Mammary epithelial cell (primary cell): ENCODE measurements at regions of chr1 and their contacts with region 1.

Region 1: GRCh38 chr1:64966158-64966971 is at the start of gene JAK1:
- DNase-seq: peak; percentile 71
- H3K4me3 ChIP-seq: peak within 1 kb of the TSS; percentile 79 to 89 (median 87)
- H3K27ac ChIP-seq: peak within 1 kb of the TSS; percentile 87
- H3K4me1 ChIP-seq: peaks cover 25% of the 10 kb centered on the region
- H3K27me3 ChIP-seq: no peaks in the 10 kb centered on the region
- CTCF ChIP-seq: no peak
- total RNA-seq, gene JAK1: 74.9 to 125 TPM

Region 2: DNA sequence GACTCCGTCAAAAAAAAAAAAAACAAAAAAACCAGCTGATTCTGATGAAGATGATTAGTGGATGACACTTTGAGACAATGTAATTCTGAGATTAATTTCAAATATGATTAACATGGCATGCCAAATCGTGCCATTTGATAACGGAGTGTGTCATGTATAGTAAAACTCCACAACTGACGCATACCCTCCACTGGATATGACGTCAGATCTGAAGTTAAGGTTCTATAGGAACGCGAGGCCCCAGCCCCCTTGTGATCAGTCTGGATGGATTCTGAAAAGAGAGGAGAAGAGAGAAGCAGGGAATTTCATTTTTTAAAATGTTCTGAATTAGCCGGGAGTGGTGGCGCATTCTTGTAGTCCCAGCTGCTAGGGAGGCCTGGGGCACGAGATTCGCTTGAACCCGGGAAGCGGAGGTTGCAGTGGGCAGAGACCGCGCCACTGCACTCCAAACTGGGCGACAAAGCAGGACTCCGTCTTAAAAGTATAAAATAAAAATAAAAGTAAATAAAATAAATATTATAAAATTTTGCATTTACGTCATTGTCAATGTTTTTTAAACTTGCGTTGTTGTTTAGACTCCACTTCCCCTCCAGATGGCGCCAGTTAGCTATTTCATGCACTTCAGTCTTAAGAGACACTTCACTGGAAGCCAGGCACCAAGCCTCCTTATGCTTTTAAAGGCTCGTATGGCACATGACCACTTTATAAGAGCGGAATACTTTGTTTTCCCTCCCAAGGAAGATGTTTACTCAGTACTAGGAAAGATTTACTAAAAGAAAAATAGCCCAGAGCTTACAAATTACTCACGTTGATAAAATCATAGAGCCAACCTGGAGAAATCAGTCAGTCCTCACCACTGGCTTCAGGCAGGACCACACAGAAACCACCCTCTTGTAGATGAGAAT is 697.5 kb before region 1 on chr1:
- CTCF ChIA-PET with region 1: no interaction called
- dilution Hi-C with region 1: no loop called
- in situ Hi-C with region 1: no loop called
- intact Hi-C with region 1: loop called (anchors 10 kb)
- DNase-seq: peak; percentile 57
- H3K4me3 ChIP-seq: peak overlapping the region in 1 of 3 experiments; percentile 34
- H3K27ac ChIP-seq: no peak overlapping the region
- H3K4me1 ChIP-seq: peaks cover 5% of the 10 kb centered on the region
- H3K27me3 ChIP-seq: no peaks in the 10 kb centered on the region
- CTCF ChIP-seq: peak; percentile 55 to 77

Region 3: DNA sequence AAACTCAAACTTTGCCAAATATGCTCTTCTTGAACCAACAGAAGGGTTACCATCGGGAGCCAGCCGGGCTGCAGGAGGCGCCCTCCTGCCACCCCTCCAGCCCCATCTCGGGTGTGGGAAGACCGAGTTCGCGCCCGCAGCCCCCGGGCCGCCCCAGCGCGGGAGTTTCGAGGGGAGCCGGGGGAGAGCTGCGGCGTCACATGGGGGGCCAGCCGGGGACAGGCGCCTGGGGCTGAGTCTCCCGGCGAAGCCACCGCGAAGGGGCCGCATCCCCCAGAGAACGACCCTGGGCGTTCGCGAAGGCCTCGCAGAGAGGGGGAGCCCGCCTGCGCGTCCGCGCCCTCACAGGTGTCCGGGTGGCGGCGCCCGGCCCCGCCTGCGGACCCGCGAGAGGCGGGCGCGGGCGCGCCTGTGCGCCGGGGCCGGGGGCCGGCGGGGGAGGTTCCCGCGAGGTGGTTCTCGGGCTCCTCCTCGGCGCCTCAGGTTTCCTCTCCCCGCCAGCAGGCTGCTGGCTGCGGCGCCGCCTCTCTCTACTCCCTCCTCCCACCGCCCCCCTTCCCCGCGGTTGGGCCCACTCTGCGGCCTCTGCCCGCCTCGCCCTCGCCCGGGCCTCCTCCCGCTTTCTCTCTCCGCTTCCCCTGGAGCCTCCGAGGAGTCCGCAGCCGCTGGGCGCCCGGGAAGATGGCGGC is 221.7 kb before region 1 on chr1 and contains the start of gene RAVER2:
- CTCF ChIA-PET with region 1: no interaction called
- dilution Hi-C with region 1: no loop called
- in situ Hi-C with region 1: no loop called
- intact Hi-C with region 1: loop called (anchors 1 kb)
- DNase-seq: peak; percentile 71
- H3K4me3 ChIP-seq: peak within 1 kb of the TSS; percentile 79 to 87 (median 80)
- H3K27ac ChIP-seq: peak within 1 kb of the TSS; percentile 35
- H3K4me1 ChIP-seq: peaks cover 5% of the 10 kb centered on the region
- H3K27me3 ChIP-seq: no peaks in the 10 kb centered on the region
- CTCF ChIP-seq: peak; percentile 17 to 70
- total RNA-seq, gene RAVER2: 9.7 to 15.8 TPM

Region 4: DNA sequence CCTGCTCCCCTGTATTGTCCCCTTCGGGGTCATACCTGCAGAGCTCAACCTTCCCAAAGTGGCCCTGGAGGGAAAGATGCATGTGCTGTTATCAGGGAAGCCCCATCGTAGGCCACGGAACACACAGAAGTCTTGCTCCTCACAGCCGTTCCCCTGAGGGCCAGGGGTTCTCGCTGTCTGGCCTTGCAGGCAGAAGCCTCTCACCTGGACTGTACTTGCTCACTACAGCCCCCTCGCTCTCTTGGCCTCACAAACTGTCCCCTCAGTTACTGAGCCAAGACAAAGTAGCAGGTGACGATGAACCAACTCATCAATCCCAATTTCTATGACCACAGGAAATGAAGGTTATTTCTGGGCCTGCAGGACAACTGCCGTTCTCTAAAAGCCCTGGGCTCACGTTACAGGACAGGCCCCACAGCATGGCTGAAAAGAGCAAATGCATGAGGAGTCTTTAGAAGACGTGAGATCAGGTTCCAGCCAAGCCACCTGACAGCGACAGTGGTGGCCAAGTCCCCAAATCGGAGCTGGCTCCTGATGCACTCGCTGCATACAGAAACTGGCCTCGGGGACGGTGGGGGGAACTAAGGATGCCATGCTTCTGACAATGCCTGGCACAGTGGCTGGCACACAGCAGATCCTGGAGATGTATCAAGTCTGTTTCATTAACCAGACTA is 126.5 kb before region 1 on chr1:
- CTCF ChIA-PET with region 1: no interaction called
- dilution Hi-C with region 1: no loop called
- in situ Hi-C with region 1: no loop called
- intact Hi-C with region 1: loop called (anchors 5 kb)
- DNase-seq: no peak
- H3K4me3 ChIP-seq: no peak overlapping the region
- H3K27ac ChIP-seq: no peak overlapping the region
- H3K4me1 ChIP-seq: peaks cover 3% of the 10 kb centered on the region
- H3K27me3 ChIP-seq: no peaks in the 10 kb centered on the region
- CTCF ChIP-seq: no peak

Region 5: GRCh38 chr1:64882574-64883255 is 83.7 kb before region 1 on chr1:
- CTCF ChIA-PET with region 1: no interaction called
- dilution Hi-C with region 1: no loop called
- in situ Hi-C with region 1: no loop called
- intact Hi-C with region 1: loop called (anchors 5 kb)
- DNase-seq: no peak
- H3K4me3 ChIP-seq: no peak overlapping the region
- H3K27ac ChIP-seq: no peak overlapping the region
- H3K4me1 ChIP-seq: peaks cover 5% of the 10 kb centered on the region
- H3K27me3 ChIP-seq: no peaks in the 10 kb centered on the region
- CTCF ChIP-seq: no peak

Region 6: GRCh38 chr1:64917328-64917861 is 49.0 kb before region 1 on chr1:
- CTCF ChIA-PET with region 1: no interaction called
- dilution Hi-C with region 1: no loop called
- in situ Hi-C with region 1: no loop called
- intact Hi-C with region 1: loop called (anchors 5 kb)
- DNase-seq: peak; percentile 78
- H3K4me3 ChIP-seq: no peak overlapping the region
- H3K27ac ChIP-seq: peak overlapping the region; percentile 45
- H3K4me1 ChIP-seq: peaks cover 43% of the 10 kb centered on the region
- H3K27me3 ChIP-seq: no peaks in the 10 kb centered on the region
- CTCF ChIP-seq: no peak

Region 7: DNA sequence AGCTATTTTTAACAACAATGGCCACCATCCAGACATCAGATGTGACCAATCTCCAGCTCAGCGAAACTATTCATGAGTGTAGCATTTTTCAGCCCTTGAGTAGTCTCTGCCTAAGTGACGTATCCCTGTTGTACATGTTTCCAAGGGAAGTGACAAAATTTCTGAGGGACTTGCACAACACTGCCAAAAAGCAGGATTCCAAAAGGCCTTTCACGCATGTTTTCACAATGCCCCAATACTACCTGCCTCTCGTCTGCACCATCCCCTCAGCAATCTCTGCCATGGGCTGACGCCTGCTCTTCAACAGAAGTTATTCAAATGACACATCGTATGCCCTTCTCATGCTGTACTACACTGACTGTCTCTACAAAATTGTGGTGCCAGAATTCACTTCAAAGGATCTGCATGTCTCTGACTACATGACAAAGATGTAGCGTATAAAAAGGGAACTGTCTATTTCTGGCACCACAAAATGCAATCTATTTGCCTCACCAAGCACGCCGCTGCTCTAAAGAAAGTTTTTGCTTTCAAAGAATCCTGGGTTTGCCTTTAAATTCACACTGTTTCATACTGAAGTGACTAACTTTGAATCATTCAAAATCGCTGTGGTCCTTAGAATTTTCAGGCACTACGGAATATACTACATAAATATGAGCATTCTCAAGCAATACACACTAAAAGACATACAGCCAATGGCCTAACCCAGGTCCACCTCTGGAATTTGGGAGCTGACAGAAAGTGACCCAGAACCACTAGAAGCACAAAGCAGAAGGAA is 32.9 kb before region 1 on chr1:
- CTCF ChIA-PET with region 1: no interaction called
- dilution Hi-C with region 1: no loop called
- in situ Hi-C with region 1: no loop called
- intact Hi-C with region 1: no loop called
- DNase-seq: peak; percentile 61
- H3K4me3 ChIP-seq: no peak overlapping the region
- H3K27ac ChIP-seq: peak overlapping the region; percentile 49
- H3K4me1 ChIP-seq: peaks cover 24% of the 10 kb centered on the region
- H3K27me3 ChIP-seq: no peaks in the 10 kb centered on the region
- CTCF ChIP-seq: no peak

Region 8: DNA sequence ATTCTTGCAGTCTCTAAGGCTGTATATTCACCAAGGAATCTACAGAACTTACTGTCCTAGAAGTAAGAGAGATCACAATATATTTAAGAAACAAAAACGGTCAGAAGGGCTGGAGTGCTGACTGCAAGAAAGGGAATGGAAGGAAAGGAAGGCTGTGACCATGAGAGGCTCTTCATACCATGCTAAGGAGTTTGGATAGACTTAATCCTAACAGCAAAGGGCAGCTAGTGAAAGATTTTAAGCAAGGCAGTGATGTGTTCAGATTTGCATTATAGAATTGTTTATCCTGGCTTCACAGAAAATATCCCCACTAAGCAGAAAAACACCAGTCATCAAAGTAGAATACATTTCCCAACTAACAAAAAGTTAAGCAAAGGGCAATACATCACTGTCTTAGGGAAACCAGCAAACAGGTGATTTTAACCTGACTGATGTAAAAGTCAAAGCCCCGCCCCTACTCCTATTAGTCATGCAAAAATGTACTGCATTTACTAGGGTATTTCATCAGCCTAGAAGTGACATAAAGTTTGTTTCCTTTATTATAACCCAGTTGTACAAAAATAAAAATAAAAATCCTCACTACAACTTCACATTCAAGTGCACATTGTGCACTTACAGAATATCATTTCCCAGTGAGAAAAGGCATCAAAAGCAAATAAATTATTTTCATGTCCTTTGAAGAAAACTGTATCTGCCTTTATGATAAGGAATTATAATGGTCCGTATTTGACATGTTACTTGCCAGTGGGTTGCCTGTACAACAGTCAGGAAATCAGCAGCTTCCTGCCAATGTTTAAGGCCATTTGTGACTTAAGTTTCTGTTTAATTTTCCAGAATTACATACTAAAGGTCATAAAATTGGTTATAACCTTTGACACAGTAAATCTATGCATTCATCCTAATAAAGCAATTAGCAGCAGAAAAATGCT is 17.2 kb before region 1 on chr1:
- CTCF ChIA-PET with region 1: no interaction called
- dilution Hi-C with region 1: no loop called
- in situ Hi-C with region 1: no loop called
- intact Hi-C with region 1: no loop called
- DNase-seq: peak; percentile 71
- H3K4me3 ChIP-seq: no peak overlapping the region
- H3K27ac ChIP-seq: peak overlapping the region; percentile 81
- H3K4me1 ChIP-seq: peaks cover 15% of the 10 kb centered on the region
- H3K27me3 ChIP-seq: no peaks in the 10 kb centered on the region
- CTCF ChIP-seq: no peak